Adrenal gland (tissue), 19 donors: ENCODE measurements at regions of chr14 and their contacts with region 1.

Region 1: DNA sequence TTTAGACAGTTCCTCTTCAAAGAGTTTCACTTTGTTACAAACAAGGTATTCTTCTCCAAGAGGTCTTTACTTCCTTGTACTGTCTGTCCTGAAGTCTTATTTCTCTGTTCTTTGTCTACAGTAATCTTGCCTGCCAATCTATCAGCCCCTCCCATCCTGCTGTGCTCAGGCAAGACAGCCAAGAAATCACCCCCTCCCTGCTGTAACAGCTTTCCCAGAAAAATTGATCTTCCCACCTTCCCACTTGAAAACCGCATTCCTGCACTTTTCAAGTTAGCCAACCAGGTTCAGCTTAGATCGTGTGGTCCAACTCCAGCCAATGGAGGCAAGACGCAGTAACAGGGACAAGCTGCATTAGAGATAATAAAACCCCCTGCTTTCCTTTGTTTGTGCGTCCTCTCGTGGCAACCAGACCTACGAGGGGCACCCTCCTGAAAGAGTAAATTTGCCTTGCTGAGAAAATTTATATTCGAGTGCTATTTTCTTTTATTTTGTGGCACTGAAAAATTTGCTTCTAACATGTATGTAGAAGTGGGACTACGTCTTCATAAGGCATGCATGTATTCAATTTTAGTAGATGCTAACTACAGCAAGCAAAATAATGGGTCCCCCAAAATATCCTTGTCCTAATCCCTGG is 46.5 kb upstream of the ESR2 start:
- DNase-seq: no peak
- H3K4me3 ChIP-seq: no peak overlapping the region
- H3K27ac ChIP-seq: no peak overlapping the region
- H3K4me1 ChIP-seq: peaks cover 0 to 7% of the 10 kb centered on the region in 2 donors
- H3K27me3 ChIP-seq: no peaks in the 10 kb centered on the region
- CTCF ChIP-seq: no peak
- POLR2A ChIP-seq: no peak

Region 2: DNA sequence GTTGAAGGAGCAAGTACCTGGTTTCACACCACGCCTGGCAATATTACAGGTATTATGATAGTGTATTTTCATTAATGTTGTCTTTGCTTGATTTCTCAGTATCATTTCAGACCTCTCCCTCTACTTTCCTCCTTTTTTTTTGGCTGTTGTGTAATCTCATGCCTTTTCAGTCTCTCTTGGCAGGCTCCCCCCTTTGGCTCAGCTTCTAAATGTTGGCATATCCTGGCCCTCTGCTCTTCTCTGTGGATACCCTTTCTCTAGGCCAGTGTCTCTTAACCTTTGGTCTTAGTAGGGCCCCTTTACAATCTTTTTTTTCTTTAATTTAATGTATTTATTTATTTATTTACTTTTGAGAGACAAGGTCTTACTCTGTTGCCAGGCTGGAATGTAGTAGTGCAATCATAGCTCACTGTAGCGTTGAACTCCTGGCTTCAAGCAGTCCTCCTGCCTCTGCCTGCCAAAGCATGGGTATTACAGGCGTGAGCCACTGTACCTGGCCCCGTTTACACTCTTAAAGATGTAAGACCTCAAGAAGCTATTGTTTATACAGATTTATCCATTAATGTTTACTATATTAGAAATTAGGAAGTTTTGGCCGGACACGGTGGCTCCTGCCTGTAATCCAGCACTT is 60.3 kb after region 1 on chr14:
- intact Hi-C with region 1: no loop called
- DNase-seq: peak in 1 of 7 donors; percentile 19
- H3K4me3 ChIP-seq: no peak overlapping the region
- H3K27ac ChIP-seq: no peak overlapping the region
- H3K4me1 ChIP-seq: no peaks in the 10 kb centered on the region
- H3K27me3 ChIP-seq: no peaks in the 10 kb centered on the region
- CTCF ChIP-seq: no peak
- POLR2A ChIP-seq: no peak

Region 3: GRCh38 chr14:64488590-64489099 is 148.0 kb after region 1 on chr14:
- intact Hi-C with region 1: loop called in 1 of 2 experiments (anchors 10 kb)
- DNase-seq: no peak
- H3K4me3 ChIP-seq: no peak overlapping the region
- H3K27ac ChIP-seq: no peak overlapping the region
- H3K4me1 ChIP-seq: peaks cover 0 to 3% of the 10 kb centered on the region in 2 donors
- H3K27me3 ChIP-seq: no peaks in the 10 kb centered on the region
- CTCF ChIP-seq: no peak
- POLR2A ChIP-seq: no peak

Region 4: DNA sequence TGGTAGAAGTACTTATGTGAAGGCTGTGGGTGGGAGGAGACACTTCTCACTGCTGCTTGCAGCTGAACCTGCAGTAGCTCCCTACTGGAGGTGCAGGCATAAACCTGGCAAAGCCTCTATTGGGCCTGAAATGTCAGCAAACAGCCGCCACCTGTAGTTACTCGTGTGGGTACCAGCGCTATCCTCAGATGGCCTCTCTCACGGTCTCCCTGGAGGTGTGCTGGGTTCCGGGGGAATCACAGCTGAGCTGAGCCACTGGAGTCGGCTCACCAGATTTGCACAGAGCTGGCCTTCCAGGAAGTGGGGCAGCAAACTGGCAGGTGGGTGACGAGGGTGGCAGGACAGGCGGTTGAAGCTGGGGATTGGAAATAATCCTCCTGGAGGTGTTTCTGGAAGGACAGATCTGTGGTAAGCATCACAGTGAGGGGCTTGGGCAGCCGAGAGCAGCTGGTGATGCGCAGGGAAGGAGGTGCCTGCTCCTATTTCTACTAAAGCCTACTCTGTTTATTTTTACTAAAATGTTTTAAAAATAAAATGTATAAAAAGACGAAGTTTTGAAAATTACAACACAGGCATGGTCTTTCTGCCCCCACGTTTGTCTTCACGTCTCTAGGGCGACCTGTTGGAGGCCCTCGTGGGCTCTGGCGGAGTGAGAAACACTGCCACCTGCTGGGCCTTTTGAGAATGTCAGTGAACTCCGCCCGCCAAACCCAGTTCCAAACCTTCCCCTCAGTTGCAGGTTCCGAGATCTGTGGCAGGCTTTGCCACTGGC is 295.7 kb after region 1 on chr14:
- intact Hi-C with region 1: loop called in 1 of 2 experiments (anchors 10 kb)
- DNase-seq: peak; percentile 62 to 86 (median 69)
- H3K4me3 ChIP-seq: no peak overlapping the region
- H3K27ac ChIP-seq: peak overlapping the region in 1 of 5 donors; percentile 24
- H3K4me1 ChIP-seq: peaks cover 0 to 6% of the 10 kb centered on the region in 2 donors
- H3K27me3 ChIP-seq: no peaks in the 10 kb centered on the region
- CTCF ChIP-seq: peak; percentile 75 to 93 (median 88)
- POLR2A ChIP-seq: no peak

Region 5: GRCh38 chr14:64764641-64765520 is 424.2 kb after region 1 on chr14:
- intact Hi-C with region 1: loop called in 1 of 2 experiments (anchors 10 kb)
- DNase-seq: peak; percentile 62 to 86 (median 72)
- H3K4me3 ChIP-seq: peak overlapping the region in 1 of 4 donors; percentile 42
- H3K27ac ChIP-seq: peak overlapping the region in 2 of 5 donors; percentile 75 to 81
- H3K4me1 ChIP-seq: peaks cover 10 to 37% of the 10 kb centered on the region in 2 donors
- H3K27me3 ChIP-seq: no peaks in the 10 kb centered on the region
- CTCF ChIP-seq: peak; percentile 85 to 95 (median 88)
- POLR2A ChIP-seq: no peak